Activated T-helper 1 cell treated with anti-CD3 and anti-CD28 coated beads, Interleukin-12 subunit alpha, Interleukin-12 subunit beta, Interleukin-2, Interleukin-4 antibody, amounts not matched to agents 30 ng/mL and 10 ng/mL and 1 ng/mL, durations not matched to agents 14 hours and 24 hours and 36 hours (primary cell): ENCODE measurements at regions of chr1 and their contacts with region 1.

Region 1: GRCh38 chr1:182084487-182085316 is 23.2 kb upstream of the ZNF648 start:
- DNase-seq: peak; percentile 76
- H3K4me3 Mint-ChIP-seq: peak overlapping the region; percentile 26
- H3K27ac Mint-ChIP-seq: peak overlapping the region; percentile 61
- H3K4me1 Mint-ChIP-seq: peaks cover 55% of the 10 kb centered on the region
- H3K27me3 Mint-ChIP-seq: no peaks in the 10 kb centered on the region

Region 2: GRCh38 chr1:181310560-181310959 is 774.1 kb before region 1 on chr1:
- intact Hi-C with region 1: no loop called
- DNase-seq: no peak
- H3K4me3 Mint-ChIP-seq: no peak overlapping the region
- H3K27ac Mint-ChIP-seq: no peak overlapping the region
- H3K4me1 Mint-ChIP-seq: no peaks in the 10 kb centered on the region
- H3K27me3 Mint-ChIP-seq: peaks cover 26% of the 10 kb centered on the region

Region 3: DNA sequence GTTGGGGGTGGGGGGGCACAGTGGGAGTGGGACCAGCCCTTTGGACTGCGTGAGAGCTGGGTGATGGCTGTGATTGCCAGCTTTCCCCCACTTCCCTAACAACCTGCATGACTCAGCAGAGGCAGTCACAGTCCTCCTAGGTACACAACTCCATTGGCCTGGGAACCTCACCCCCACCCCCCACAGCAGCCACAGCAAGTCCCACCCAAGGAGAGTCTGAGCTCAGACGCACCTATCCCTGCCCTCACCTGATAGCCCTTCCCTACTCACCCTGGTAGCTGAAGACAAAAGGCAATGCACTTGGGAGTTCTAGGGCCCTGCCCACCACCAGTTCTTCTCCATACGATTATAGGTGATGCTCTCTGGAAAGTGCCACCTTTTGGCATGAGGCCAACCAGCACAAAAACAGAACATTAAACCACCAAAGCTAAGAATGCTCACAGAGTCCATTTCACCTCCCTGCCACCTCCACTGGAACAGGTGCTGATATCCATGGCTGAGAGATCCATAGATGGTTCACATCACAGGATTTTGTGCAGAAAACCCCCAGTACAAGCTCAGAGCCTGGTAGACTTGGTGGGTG is 212.0 kb before region 1 on chr1:
- intact Hi-C with region 1: no loop called
- DNase-seq: no peak
- H3K4me3 Mint-ChIP-seq: no peak overlapping the region
- H3K27ac Mint-ChIP-seq: no peak overlapping the region
- H3K4me1 Mint-ChIP-seq: no peaks in the 10 kb centered on the region
- H3K27me3 Mint-ChIP-seq: peaks cover 4% of the 10 kb centered on the region

Region 4: GRCh38 chr1:182143154-182143657 is 58.5 kb after region 1 on chr1:
- intact Hi-C with region 1: loop called (anchors 1 kb)
- DNase-seq: peak; percentile 74
- H3K4me3 Mint-ChIP-seq: no peak overlapping the region
- H3K27ac Mint-ChIP-seq: no peak overlapping the region
- H3K4me1 Mint-ChIP-seq: peaks cover 38% of the 10 kb centered on the region
- H3K27me3 Mint-ChIP-seq: peaks cover 2% of the 10 kb centered on the region

Region 5: DNA sequence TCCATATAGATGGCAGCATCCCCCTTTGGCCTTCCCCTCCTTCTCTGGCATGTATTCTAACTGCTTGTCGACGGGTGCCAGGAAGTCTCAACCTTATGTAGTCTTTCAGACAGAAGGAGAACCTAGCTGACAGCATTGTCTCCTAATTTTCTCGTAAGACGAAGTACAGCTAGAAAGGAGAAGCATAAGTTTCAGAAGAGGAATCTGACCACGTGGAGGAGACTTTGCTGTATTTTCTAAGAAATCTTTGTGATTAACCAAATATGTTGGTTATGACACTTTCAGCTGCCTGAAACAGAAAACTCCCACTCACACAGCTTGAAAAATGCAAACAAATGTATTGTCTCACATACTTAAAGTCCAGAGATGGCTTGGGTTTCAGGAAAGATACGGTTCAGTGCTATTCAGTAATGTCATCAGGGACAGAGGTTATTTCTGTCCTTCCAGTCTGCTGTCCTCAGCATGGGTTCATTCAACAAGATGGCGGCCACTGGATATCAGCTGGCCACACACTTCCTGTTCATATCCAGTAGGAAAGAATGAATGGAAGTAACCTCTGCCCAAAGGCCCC is 86.3 kb after region 1 on chr1:
- intact Hi-C with region 1: no loop called
- DNase-seq: no peak
- H3K4me3 Mint-ChIP-seq: no peak overlapping the region
- H3K27ac Mint-ChIP-seq: no peak overlapping the region
- H3K4me1 Mint-ChIP-seq: peaks cover 6% of the 10 kb centered on the region
- H3K27me3 Mint-ChIP-seq: peaks cover 4% of the 10 kb centered on the region

Region 6: GRCh38 chr1:182446033-182446669 is 361.4 kb after region 1 on chr1:
- intact Hi-C with region 1: loop called (anchors 2 kb)
- DNase-seq: no peak
- H3K4me3 Mint-ChIP-seq: no peak overlapping the region
- H3K27ac Mint-ChIP-seq: no peak overlapping the region
- H3K4me1 Mint-ChIP-seq: peaks cover 7% of the 10 kb centered on the region
- H3K27me3 Mint-ChIP-seq: peaks cover 3% of the 10 kb centered on the region

Region 7: DNA sequence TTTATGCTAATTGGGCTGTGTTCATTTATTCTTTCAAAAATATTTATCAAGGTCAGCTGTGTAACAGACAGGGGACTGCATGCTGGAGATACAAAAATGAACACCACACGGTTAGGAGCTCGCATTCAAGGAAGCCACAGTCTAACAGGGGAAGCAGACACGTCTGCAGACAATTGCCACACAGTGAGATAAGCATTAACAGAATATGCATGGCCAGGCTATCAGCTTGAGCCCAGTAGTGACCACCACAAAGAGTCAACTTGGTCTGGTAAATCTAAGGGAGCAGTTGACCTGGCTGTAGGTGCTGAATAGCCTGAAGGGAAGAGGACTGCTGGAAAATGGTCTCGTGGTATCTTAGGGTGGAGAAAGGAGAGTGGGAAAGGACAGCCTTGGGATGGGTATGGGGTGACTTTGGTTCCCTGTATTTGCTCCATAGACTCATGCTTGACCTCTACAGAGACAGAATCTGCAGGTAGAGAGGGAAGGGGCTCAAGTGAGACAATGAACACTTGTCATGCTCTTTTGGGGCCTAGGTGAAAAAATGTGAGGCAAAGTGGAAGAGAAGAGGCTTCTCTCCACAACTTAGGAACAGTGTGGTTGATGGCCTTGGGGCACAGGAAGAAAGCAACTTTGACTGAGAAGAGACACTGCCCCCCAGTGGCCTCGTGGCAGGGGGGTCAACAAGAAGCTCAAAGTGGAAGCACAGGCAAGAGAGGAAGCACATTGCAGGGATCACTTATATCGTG is 697.3 kb after region 1 on chr1:
- intact Hi-C with region 1: loop called (anchors 1 kb)
- DNase-seq: peak; percentile 52
- H3K4me3 Mint-ChIP-seq: no peak overlapping the region
- H3K27ac Mint-ChIP-seq: no peak overlapping the region
- H3K4me1 Mint-ChIP-seq: peaks cover 30% of the 10 kb centered on the region
- H3K27me3 Mint-ChIP-seq: peaks cover 4% of the 10 kb centered on the region

Region 8: DNA sequence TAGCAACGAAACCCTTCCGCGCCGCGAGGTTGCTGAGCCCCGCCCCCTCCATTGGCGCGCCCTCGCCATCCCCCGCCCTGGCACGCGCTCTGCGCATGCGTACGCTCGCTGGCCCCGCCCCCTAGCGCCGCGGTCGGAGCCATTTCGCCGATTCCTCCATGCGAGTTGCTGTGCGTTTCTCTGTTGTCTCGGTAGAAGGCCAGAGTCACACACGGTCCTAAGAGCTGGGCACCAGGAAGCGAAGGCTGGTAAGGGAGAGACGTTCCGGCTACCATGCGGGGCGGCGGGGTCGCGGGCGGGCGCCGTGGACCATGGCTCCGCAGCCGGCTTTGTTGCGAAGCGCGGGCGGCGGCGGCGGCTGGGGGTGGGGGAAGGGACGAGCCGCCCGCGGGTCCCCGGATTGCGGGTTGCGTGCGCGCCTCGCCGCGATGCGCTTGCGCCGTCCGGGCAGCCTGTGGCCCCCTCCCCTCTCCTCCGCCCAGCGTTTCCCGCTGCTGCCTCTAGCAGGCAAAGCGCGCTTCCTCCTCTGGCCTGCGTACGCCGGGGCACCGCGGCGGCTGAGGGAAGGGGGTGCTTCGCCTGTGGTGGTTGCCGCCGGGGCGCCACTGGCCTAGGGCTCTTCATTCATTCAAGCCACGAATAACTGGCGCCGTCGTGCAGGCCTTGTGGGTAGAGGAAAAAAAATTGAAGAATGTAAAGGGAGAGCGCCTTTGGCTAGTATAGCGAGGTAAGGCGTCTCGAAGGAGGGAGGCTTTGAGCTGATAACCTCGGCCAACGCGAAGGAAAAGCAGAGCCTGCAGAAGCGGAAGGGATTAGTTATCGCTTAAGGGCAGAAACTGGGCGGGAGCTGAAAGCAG is 754.7 kb after region 1 on chr1 and contains the start of gene DHX9:
- intact Hi-C with region 1: loop called (anchors 1 kb)
- DNase-seq: peak; percentile 94
- H3K4me3 Mint-ChIP-seq: peak within 1 kb of the TSS; percentile 94
- H3K27ac Mint-ChIP-seq: peak within 1 kb of the TSS; percentile 98
- H3K4me1 Mint-ChIP-seq: peaks cover 47% of the 10 kb centered on the region
- H3K27me3 Mint-ChIP-seq: peaks cover 3% of the 10 kb centered on the region
- total RNA-seq, gene DHX9: 346 and 355 TPM in 2 replicates